CD4-positive, alpha-beta T cell (primary cell): ENCODE measurements at regions of chr19 and their contacts with region 1.

Region 1: DNA sequence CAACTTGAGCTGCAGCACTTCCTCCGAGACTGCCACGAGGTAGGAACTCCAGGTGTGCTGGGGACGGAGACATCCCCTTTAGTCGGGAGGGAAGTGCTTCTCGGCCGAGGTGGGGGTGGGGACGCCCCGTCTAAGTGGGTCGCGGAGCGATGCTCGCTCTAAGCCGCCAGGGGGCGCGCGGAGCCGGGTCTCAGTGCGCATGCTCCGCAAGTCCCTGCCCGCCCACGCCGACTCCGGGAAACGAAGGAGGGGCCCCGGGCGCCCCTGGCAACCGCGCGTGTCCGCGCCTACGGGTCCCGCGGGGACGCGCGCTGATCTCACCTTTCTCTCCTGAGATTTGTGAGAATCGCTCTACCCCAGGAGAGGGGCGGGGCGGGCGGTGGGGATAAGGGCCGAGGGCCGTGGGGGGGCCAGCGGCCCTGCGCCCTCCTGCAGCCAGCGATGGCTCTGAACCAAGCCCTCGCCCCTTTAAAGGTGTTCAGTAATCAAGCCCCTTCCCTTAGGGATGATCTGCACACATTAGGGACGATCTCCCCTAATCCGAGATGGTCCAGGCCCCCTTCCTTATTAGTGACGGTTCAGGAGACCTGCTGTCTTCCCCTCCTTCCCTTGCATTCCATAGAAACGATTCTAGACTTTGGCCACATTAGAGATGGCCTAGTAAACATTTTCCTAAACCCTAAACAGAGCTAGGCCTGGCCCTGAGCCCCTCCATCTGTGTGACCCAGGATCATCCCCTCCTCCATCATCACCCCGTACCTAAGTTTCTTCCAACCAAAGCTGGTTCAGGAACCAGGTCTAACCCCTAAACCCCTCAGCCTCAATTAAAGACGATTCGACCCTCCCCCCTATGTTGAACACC is 47.3 kb upstream of the SHKBP1 start:
- DNase-seq: peak; percentile 82 to 95 (median 89)
- ATAC-seq: peak; percentile 91
- H3K4me3 ChIP-seq: peak overlapping the region; percentile 54
- H3K4me3 Mint-ChIP-seq: peak overlapping the region; percentile 74
- H3K27ac ChIP-seq: no peak overlapping the region
- H3K27ac Mint-ChIP-seq: no peak overlapping the region
- H3K4me1 ChIP-seq: peaks cover 16% of the 10 kb centered on the region
- H3K4me1 Mint-ChIP-seq: peaks cover 17% of the 10 kb centered on the region
- H3K27me3 ChIP-seq: peaks cover 23% of the 10 kb centered on the region in 2 experiments
- H3K27me3 Mint-ChIP-seq: peaks cover 35% of the 10 kb centered on the region
- CTCF ChIP-seq: peak; percentile 95

Region 2: DNA sequence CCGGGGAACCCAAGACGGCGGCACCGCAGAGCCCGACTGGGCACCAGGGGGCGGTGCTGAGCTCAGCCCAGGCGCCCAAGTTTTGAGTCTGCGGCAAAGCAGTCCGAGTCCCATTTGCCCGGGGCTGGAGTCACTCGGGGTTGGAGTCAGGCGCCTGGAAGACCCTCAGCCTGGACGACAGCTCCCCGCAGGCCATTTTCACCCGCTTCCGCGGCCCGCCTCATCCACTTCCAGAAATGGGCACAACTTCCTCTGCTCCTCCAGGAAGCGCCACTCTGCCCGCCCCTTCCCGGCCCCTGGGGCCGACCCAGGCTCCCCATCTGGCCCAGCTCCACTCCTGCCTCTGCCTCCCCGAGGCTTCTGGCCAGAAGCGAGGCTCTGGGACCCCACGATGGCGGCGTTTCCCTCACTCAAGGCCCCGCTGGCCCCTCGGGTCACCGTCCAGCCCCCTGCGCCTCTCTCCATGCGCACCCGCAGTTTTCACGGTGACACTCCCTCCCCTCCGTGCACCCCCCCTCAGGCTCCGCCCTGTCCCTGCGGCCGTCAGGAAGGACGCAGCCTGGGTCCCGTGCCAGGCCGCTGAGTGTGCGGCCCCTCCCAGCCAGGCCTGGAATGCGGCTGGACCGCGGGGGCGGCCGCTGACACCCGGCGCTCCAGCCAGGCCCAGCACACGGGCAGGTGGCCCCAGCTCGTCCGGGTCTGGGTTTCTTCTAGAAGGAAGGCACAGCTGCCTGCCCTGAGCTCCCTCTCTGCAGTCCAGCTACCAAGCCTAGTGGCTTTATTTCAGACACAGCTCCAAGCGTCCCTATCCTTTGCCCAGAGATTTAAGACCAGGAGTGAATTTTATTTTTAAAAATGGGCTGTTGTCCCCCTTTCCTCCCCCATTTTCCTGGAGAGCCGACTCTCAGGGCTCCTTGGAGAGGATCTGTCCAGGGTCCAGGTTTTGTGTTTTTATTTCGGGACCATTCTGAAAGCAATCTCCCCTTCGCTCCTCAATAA is 108.3 kb before region 1 on chr19:
- CTCF ChIA-PET with region 1: no interaction called
- POLR2A ChIA-PET with region 1: no interaction called
- intact Hi-C with region 1: no loop called
- DNase-seq: peak; percentile 55 to 82 (median 68)
- ATAC-seq: peak; percentile 35
- H3K4me3 ChIP-seq: peak overlapping the region; percentile 94
- H3K4me3 Mint-ChIP-seq: peak overlapping the region; percentile 93
- H3K27ac ChIP-seq: peak overlapping the region; percentile 83 to 90
- H3K27ac Mint-ChIP-seq: peak overlapping the region; percentile 91
- H3K4me1 ChIP-seq: peaks cover 52% of the 10 kb centered on the region
- H3K4me1 Mint-ChIP-seq: peaks cover 41% of the 10 kb centered on the region
- H3K27me3 ChIP-seq: no peaks in the 10 kb centered on the region
- H3K27me3 Mint-ChIP-seq: no peaks in the 10 kb centered on the region
- CTCF ChIP-seq: peak; percentile 98

Region 3: GRCh38 chr19:40474737-40475136 is 54.6 kb before region 1 on chr19:
- CTCF ChIA-PET with region 1: no interaction called
- POLR2A ChIA-PET with region 1: no interaction called
- intact Hi-C with region 1: no loop called
- DNase-seq: no peak
- ATAC-seq: no peak
- H3K4me3 ChIP-seq: no peak overlapping the region
- H3K4me3 Mint-ChIP-seq: no peak overlapping the region
- H3K27ac ChIP-seq: no peak overlapping the region
- H3K27ac Mint-ChIP-seq: no peak overlapping the region
- H3K4me1 ChIP-seq: no peaks in the 10 kb centered on the region
- H3K4me1 Mint-ChIP-seq: no peaks in the 10 kb centered on the region
- H3K27me3 ChIP-seq: no peaks in the 10 kb centered on the region
- H3K27me3 Mint-ChIP-seq: peaks cover 9% of the 10 kb centered on the region
- CTCF ChIP-seq: no peak

Region 4: GRCh38 chr19:40512473-40513344 is 16.6 kb before region 1 on chr19:
- CTCF ChIA-PET with region 1: no interaction called
- POLR2A ChIA-PET with region 1: no interaction called
- intact Hi-C with region 1: no loop called
- DNase-seq: peak in 2 of 14 experiments; percentile 20 to 22
- ATAC-seq: peak; percentile 34
- H3K4me3 ChIP-seq: no peak overlapping the region
- H3K4me3 Mint-ChIP-seq: no peak overlapping the region
- H3K27ac ChIP-seq: no peak overlapping the region
- H3K27ac Mint-ChIP-seq: no peak overlapping the region
- H3K4me1 ChIP-seq: peaks cover 4% of the 10 kb centered on the region
- H3K4me1 Mint-ChIP-seq: peaks cover 5% of the 10 kb centered on the region
- H3K27me3 ChIP-seq: peaks cover 34% of the 10 kb centered on the region in 2 experiments
- H3K27me3 Mint-ChIP-seq: peaks cover 64% of the 10 kb centered on the region
- CTCF ChIP-seq: no peak

Region 5: GRCh38 chr19:40560092-40560507 is 30.8 kb after region 1 on chr19:
- CTCF ChIA-PET with region 1: no interaction called
- POLR2A ChIA-PET with region 1: no interaction called
- intact Hi-C with region 1: no loop called
- DNase-seq: no peak
- ATAC-seq: no peak
- H3K4me3 ChIP-seq: no peak overlapping the region
- H3K4me3 Mint-ChIP-seq: no peak overlapping the region
- H3K27ac ChIP-seq: no peak overlapping the region
- H3K27ac Mint-ChIP-seq: no peak overlapping the region
- H3K4me1 ChIP-seq: no peaks in the 10 kb centered on the region
- H3K4me1 Mint-ChIP-seq: no peaks in the 10 kb centered on the region
- H3K27me3 ChIP-seq: peaks cover 19 to 30% of the 10 kb centered on the region in 2 experiments
- H3K27me3 Mint-ChIP-seq: peaks cover 46% of the 10 kb centered on the region
- CTCF ChIP-seq: no peak

Region 6: GRCh38 chr19:40576585-40577451 is 47.5 kb after region 1 on chr19 and contains the start of gene SHKBP1:
- CTCF ChIA-PET with region 1: no interaction called
- POLR2A ChIA-PET with region 1: no interaction called
- intact Hi-C with region 1: loop called in 1 of 2 experiments (anchors 2 kb)
- DNase-seq: peak; percentile 84 to 96 (median 90)
- ATAC-seq: peak; percentile 99
- H3K4me3 ChIP-seq: peak within 1 kb of the TSS; percentile 97
- H3K4me3 Mint-ChIP-seq: peak within 1 kb of the TSS; percentile 94
- H3K27ac ChIP-seq: peak within 1 kb of the TSS; percentile 60 to 64
- H3K27ac Mint-ChIP-seq: peak within 1 kb of the TSS; percentile 83
- H3K4me1 ChIP-seq: peaks cover 37% of the 10 kb centered on the region
- H3K4me1 Mint-ChIP-seq: peaks cover 33% of the 10 kb centered on the region
- H3K27me3 ChIP-seq: no peaks in the 10 kb centered on the region
- H3K27me3 Mint-ChIP-seq: no peaks in the 10 kb centered on the region
- CTCF ChIP-seq: no peak
- total RNA-seq, gene SHKBP1: 82.5 to 92.9 TPM

Region 7: GRCh38 chr19:40640744-40641143 is 111.4 kb after region 1 on chr19:
- CTCF ChIA-PET with region 1: no interaction called
- POLR2A ChIA-PET with region 1: no interaction called
- intact Hi-C with region 1: loop called in 1 of 2 experiments (anchors 2 kb)
- DNase-seq: peak in 2 of 14 experiments; percentile 37 to 40
- ATAC-seq: peak; percentile 37
- H3K4me3 ChIP-seq: no peak overlapping the region
- H3K4me3 Mint-ChIP-seq: no peak overlapping the region
- H3K27ac ChIP-seq: no peak overlapping the region
- H3K27ac Mint-ChIP-seq: no peak overlapping the region
- H3K4me1 ChIP-seq: peaks cover 11% of the 10 kb centered on the region
- H3K4me1 Mint-ChIP-seq: peaks cover 7% of the 10 kb centered on the region
- H3K27me3 ChIP-seq: peaks cover 0 to under 1% of the 10 kb centered on the region in 2 experiments
- H3K27me3 Mint-ChIP-seq: no peaks in the 10 kb centered on the region
- CTCF ChIP-seq: no peak